ENCODE measurements at regions of chr5 and their contacts with region 1.

Region 1: GRCh38 chr5:143395638-143396352 is 7.7 kb downstream of the NR3C1 start:
- DNase-seq: no peak
- ATAC-seq: no peak
- H3K4me3 ChIP-seq: peak overlapping the region; percentile 26
- H3K4me3 Mint-ChIP-seq: peak overlapping the region; percentile 51 to 97 (median 91)
- H3K27ac ChIP-seq: no peak overlapping the region
- H3K27ac Mint-ChIP-seq: peak overlapping the region in 2 of 9 donors; percentile 36 to 40
- H3K4me1 ChIP-seq: peaks cover 42 to 57% of the 10 kb centered on the region in 2 donors
- H3K4me1 Mint-ChIP-seq: peaks cover 46 to 99% (median 74%) of the 10 kb centered on the region in 7 donors
- H3K27me3 ChIP-seq: no peaks in the 10 kb centered on the region
- H3K27me3 Mint-ChIP-seq: no peaks in the 10 kb centered on the region

Region 2: DNA sequence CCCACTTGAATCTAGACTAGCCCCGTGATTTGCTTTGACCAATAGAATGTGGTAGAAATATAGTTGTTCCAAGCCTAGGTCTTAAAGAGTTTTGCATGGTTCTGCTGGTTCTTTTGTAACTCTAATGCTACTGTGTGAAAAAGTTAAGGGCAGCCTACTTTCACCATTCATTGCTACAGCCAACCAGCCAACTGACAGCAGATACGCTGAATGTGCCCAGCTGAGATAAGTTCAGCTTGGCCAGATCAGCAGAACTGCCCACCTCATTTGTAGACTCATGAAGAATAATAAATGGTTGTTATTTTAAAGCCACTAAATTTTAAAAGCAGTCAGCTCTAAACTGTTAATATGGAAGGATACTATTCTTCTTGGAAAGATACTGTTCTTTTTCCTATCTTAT is 16.2 kb before region 1 on chr5:
- CTCF ChIA-PET with region 1: no interaction called
- POLR2A ChIA-PET with region 1: interaction called, 4 read pairs
- intact Hi-C with region 1: loop called in 1 of 2 experiments (anchors 2 kb)
- DNase-seq: no peak
- ATAC-seq: no peak
- H3K4me3 ChIP-seq: no peak overlapping the region
- H3K4me3 Mint-ChIP-seq: peak overlapping the region in 7 of 10 donors; percentile 1 to 56 (median 14)
- H3K27ac ChIP-seq: no peak overlapping the region
- H3K27ac Mint-ChIP-seq: peak overlapping the region in 5 of 9 donors; percentile 3 to 83 (median 58)
- H3K4me1 ChIP-seq: peaks cover 27 to 37% of the 10 kb centered on the region in 2 donors
- H3K4me1 Mint-ChIP-seq: peaks cover 38 to 100% (median 95%) of the 10 kb centered on the region in 7 donors
- H3K27me3 ChIP-seq: no peaks in the 10 kb centered on the region
- H3K27me3 Mint-ChIP-seq: no peaks in the 10 kb centered on the region

Region 3: GRCh38 chr5:143418140-143418866 is 22.5 kb after region 1 on chr5:
- CTCF ChIA-PET with region 1: no interaction called
- POLR2A ChIA-PET with region 1: no interaction called
- intact Hi-C with region 1: no loop called
- DNase-seq: no peak
- ATAC-seq: no peak
- H3K4me3 ChIP-seq: no peak overlapping the region
- H3K4me3 Mint-ChIP-seq: no peak overlapping the region
- H3K27ac ChIP-seq: no peak overlapping the region
- H3K27ac Mint-ChIP-seq: peak overlapping the region in 1 of 9 donors; percentile 14
- H3K4me1 ChIP-seq: peaks cover 0 to 10% of the 10 kb centered on the region in 2 donors
- H3K4me1 Mint-ChIP-seq: peaks cover 0 to 17% (median 4%) of the 10 kb centered on the region in 7 donors
- H3K27me3 ChIP-seq: no peaks in the 10 kb centered on the region
- H3K27me3 Mint-ChIP-seq: no peaks in the 10 kb centered on the region

Region 4: DNA sequence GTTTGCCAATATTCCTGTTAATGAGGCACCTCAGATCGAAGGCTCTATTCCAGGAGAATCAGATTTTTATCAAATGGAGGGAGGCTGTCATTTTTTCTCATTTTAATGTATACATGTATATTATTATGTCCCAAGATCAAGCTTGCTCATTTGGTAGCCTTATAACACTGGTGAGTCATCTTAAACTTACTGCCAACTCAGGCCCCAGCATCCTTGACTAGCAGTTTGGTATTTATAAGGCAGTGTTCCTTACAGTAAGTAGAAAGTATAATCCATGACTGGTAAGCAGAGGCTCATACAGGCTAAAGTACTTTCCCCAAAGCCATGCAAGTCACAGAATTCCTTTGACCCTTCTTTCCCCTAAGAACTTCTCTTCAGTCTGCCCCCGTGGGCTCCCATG is 98.4 kb after region 1 on chr5:
- CTCF ChIA-PET with region 1: no interaction called
- POLR2A ChIA-PET with region 1: no interaction called
- intact Hi-C with region 1: no loop called
- DNase-seq: no peak
- ATAC-seq: no peak
- H3K4me3 ChIP-seq: no peak overlapping the region
- H3K4me3 Mint-ChIP-seq: no peak overlapping the region
- H3K27ac ChIP-seq: no peak overlapping the region
- H3K27ac Mint-ChIP-seq: no peak overlapping the region
- H3K4me1 ChIP-seq: no peaks in the 10 kb centered on the region
- H3K4me1 Mint-ChIP-seq: peaks cover 0 to 3% (median 0%) of the 10 kb centered on the region in 7 donors
- H3K27me3 ChIP-seq: no peaks in the 10 kb centered on the region
- H3K27me3 Mint-ChIP-seq: peaks cover 0 to 12% (median 5%) of the 10 kb centered on the region in 5 donors